Aorta (tissue), 5 donors: ENCODE measurements at regions of chr6 and their contacts with region 1.

Region 1: DNA sequence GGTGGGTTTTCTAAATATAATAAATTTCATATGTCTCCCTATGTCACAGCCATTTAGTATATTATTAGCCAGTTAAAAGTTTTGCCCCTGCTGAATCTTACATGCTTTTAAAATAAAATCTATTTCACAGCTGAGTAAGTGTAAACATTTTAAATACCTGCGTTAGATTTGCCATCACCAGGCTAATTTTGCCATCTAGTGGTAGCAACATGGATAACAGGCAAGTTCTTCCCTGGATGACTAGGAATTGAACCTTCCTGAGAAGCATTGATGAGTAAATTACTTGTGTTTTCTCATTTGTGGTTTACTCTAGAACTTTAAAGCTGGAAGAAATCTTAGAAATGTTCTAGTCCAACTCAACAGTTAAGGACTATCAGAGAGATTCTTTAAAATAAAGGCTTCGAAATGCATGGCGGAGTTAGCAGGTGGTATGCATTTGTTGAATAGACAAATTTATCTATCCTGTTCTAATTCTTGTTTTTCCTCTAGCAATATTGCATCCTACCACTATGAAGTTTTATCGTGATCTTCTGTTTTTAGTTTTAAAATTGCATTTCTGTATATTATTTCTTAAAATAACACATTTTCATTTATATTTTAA is 2.6 kb downstream of the PRSS35 start:
- DNase-seq: no peak
- ATAC-seq: no peak
- H3K4me3 ChIP-seq: no peak overlapping the region
- H3K27ac ChIP-seq: no peak overlapping the region
- H3K4me1 ChIP-seq: peaks cover 0 to 2% of the 10 kb centered on the region in 2 donors
- H3K27me3 ChIP-seq: no peaks in the 10 kb centered on the region

Region 2: GRCh38 chr6:83417880-83418663 is 96.9 kb before region 1 on chr6:
- intact Hi-C with region 1: loop called (anchors 2 kb)
- DNase-seq: no peak
- ATAC-seq: peak; percentile 84
- H3K4me3 ChIP-seq: no peak overlapping the region
- H3K27ac ChIP-seq: no peak overlapping the region
- H3K4me1 ChIP-seq: peaks cover 0 to 2% of the 10 kb centered on the region in 2 donors
- H3K27me3 ChIP-seq: no peaks in the 10 kb centered on the region

Region 3: DNA sequence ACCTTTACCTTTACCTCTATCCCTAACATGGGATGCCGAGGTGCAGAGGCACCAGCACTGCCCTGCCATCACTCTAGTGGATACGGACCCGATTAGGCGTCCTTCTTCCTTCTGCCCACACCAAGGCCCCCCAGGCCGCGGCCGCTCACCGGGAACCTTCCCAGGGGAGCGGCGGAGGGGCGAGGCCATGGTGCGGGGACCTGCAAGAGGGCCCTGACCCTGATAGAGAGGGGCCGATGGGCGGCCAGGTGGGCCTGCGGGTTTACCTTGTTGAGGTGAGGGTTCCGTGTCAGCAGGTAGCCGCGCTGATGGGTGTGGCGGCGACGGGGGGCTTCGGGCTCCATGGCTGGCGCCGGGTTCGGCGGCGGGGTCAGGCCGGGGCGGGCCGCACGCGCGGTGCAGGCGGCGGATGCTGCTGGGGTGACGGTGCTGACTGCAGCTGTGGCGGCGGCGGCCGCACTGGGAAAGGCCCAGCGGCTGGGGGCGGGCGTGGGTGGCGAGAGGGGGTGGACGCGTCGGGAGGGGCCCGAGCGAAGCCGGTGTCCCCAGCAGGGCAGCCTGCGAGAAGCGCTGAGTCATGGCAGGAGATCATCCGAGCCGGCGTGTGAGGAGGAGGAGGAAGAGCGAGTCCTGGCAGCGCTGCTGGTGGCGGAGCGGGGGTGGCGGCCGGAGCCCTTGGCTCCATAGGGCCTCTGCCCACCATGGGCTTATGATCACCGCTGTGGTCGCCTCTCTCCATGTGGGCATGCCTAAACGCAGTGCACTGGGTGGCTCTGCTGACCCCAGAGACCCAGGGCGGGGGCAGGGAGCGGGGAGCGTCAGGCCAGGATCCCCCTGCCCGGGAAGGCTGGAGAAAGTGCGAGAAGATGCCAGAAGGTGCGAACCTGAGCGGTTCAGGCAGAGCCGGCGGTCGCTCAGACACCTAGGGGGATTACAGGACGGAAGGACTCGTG is 84.1 kb before region 1 on chr6 and contains the start of gene ME1:
- intact Hi-C with region 1: loop called (anchors 5 kb)
- DNase-seq: peak; percentile 93 to 95
- ATAC-seq: peak; percentile 91
- H3K4me3 ChIP-seq: peak within 1 kb of the TSS; percentile 19 to 69
- H3K27ac ChIP-seq: peak within 1 kb of the TSS in 1 of 2 donors; percentile 52
- H3K4me1 ChIP-seq: no peaks in the 10 kb centered on the region
- H3K27me3 ChIP-seq: no peaks in the 10 kb centered on the region
- total RNA-seq, gene ME1: 10.9 to 21.0 TPM